ENCODE measurements at regions of chr22 and their contacts with region 1.

Region 1: GRCh38 chr22:41280066-41280465 is 5.9 kb downstream of the RANGAP1 start:
- DNase-seq: no peak
- ATAC-seq: peak in 2 of 4 donors; percentile 34 to 35
- H3K4me3 ChIP-seq: no peak overlapping the region
- H3K27ac ChIP-seq: no peak overlapping the region
- H3K4me1 ChIP-seq: peaks cover 0 to 6% (median 4%) of the 10 kb centered on the region in 3 donors
- H3K27me3 ChIP-seq: no peaks in the 10 kb centered on the region
- CTCF ChIP-seq: no peak

Region 2: DNA sequence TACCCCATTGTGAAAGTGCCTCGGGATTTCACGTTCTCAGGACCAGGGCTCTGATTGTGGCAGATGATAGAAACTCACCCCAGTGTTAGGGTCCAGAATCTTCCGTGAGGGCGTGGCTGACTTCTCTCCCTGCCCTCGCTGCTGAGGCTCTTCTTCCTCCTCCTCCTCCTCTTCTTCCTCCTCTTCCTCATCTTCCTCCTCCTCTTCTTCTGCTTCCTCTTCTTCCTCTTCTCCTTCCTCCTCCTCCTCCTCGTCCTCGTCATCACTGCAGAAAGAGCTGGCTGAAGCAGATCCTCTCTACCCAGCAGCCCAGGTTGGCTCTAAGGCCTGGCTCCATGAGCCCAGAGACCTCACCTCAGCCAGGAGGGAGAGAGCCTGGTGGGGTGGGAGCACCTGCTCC is 25.8 kb before region 1 on chr22:
- intact Hi-C with region 1: loop called in 1 of 3 experiments (anchors 2 kb)
- DNase-seq: no peak
- ATAC-seq: no peak
- H3K4me3 ChIP-seq: no peak overlapping the region
- H3K27ac ChIP-seq: no peak overlapping the region
- H3K4me1 ChIP-seq: no peaks in the 10 kb centered on the region
- H3K27me3 ChIP-seq: no peaks in the 10 kb centered on the region
- CTCF ChIP-seq: no peak

Region 3: GRCh38 chr22:41411021-41411851 is 131.2 kb after region 1 on chr22:
- intact Hi-C with region 1: no loop called
- DNase-seq: no peak
- ATAC-seq: no peak
- H3K4me3 ChIP-seq: no peak overlapping the region
- H3K27ac ChIP-seq: peak overlapping the region; percentile 37 to 70 (median 50)
- H3K4me1 ChIP-seq: peaks cover 24 to 29% (median 24%) of the 10 kb centered on the region in 3 donors
- H3K27me3 ChIP-seq: no peaks in the 10 kb centered on the region
- CTCF ChIP-seq: no peak